Activated CD4-positive, alpha-beta T cell treated with anti-CD3 and anti-CD28 coated beads for 36 hours (primary cell): ENCODE measurements at regions of chr7 and their contacts with region 1.

Region 1: GRCh38 chr7:76262683-76263402 is 39.6 kb upstream of the HSPB1 start:
- DNase-seq: peak; percentile 69
- ATAC-seq: peak; percentile 47
- H3K4me3 Mint-ChIP-seq: no peak overlapping the region
- H3K27ac Mint-ChIP-seq: no peak overlapping the region
- H3K4me1 Mint-ChIP-seq: peaks cover under 1% of the 10 kb centered on the region
- H3K27me3 Mint-ChIP-seq: peaks cover 28% of the 10 kb centered on the region

Region 2: DNA sequence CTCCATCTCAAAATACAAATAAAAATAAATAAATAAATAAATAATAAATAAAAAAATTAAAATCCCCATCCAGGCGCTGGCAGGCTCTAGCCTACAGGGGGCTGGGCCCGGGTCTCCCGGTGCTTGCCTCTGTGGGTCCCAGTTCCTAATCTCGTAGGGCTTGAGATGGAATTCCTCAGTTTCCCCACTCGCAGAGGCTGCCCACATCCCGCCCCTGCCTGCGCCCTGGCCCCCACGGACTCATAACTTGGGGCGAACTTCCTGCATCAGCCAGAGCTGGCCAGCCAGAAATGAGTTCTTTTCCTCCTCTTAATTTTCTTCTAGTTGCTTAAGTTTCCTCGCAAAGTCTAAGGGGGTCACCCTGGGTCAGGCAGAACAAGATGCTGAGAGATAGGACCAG is 83.2 kb before region 1 on chr7:
- CTCF ChIA-PET with region 1: interaction called, 32 read pairs
- POLR2A ChIA-PET with region 1: no interaction called
- intact Hi-C with region 1: loop called (anchors 1 kb)
- DNase-seq: no peak
- ATAC-seq: no peak
- H3K4me3 Mint-ChIP-seq: no peak overlapping the region
- H3K27ac Mint-ChIP-seq: no peak overlapping the region
- H3K4me1 Mint-ChIP-seq: no peaks in the 10 kb centered on the region
- H3K27me3 Mint-ChIP-seq: no peaks in the 10 kb centered on the region

Region 3: DNA sequence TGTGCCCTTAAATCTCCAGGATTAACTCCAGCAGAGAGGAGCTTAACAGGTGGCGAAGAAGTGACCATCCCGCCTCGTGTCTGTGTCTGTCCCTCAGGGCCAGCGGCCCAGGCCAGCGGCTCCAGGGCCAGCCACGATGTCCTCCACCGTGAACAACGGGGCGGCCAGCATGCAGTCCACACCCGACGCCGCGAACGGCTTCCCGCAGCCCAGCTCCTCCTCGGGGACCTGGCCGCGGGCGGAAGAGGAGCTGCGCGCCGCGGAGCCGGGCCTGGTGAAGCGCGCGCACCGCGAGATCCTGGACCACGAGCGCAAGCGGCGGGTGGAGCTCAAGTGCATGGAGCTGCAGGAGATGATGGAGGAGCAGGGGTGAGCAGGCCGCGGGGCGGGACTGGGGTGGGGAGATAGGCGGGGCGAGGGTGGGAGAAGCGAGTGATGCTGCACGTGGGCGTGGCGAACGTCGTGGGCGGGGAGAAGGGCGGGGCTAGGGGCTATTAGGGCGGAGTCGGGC is 27.9 kb before region 1 on chr7:
- CTCF ChIA-PET with region 1: interaction called, 4 read pairs
- POLR2A ChIA-PET with region 1: no interaction called
- intact Hi-C with region 1: loop called in 1 of 2 experiments (anchors 1 kb)
- DNase-seq: peak; percentile 93
- ATAC-seq: peak; percentile 98
- H3K4me3 Mint-ChIP-seq: peak overlapping the region; percentile 12
- H3K27ac Mint-ChIP-seq: no peak overlapping the region
- H3K4me1 Mint-ChIP-seq: peaks cover 5% of the 10 kb centered on the region
- H3K27me3 Mint-ChIP-seq: peaks cover 54% of the 10 kb centered on the region

Region 4: DNA sequence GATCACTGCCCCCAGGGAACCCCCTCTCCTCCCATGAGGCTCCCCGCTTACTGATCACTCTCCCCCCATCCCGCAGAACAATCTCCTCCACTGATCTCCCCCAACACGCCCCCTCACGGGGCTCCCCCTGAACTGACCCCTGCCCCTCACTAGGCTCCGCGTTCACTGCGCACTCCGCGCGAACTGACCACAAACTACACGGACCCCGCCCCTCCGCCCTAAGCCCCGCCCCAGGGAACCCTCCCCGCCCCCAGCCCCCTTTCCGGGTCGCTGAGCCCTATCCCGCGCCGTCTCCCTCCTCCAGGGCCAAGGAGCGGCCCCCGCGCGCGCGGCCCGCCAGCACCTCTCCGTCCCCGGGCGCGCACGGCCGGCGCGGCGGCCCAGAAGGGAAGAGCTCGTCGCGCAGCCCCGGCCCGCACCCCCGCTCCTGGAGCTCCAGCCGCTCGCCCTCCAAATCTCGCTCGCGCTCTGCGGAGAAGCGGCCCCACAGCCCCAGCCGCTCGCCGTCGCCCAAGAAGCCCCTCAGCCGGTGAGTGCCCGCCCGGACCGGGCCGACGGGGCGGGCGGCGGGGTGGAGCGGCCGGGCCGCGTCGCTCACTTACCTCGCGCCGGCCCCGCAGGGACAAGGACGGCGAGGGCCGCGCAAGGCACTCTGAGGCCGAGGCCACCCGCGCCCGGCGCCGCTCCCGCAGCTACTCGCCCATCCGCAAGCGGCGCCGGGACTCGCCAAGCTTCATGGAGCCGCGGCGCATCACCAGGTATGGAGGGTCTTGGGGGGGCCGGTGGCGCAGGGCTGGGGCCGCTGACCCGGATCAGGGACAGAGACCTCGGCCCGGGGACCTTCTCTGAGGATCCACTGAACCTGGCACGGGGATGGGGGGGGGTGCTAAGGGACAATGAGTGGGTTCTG is 19.8 kb after region 1 on chr7:
- CTCF ChIA-PET with region 1: interaction called, 9 read pairs
- POLR2A ChIA-PET with region 1: no interaction called
- intact Hi-C with region 1: loop called in 1 of 2 experiments (anchors 2 kb)
- DNase-seq: no peak
- ATAC-seq: peak; percentile 37
- H3K4me3 Mint-ChIP-seq: peak overlapping the region; percentile 44
- H3K27ac Mint-ChIP-seq: no peak overlapping the region
- H3K4me1 Mint-ChIP-seq: peaks cover 11% of the 10 kb centered on the region
- H3K27me3 Mint-ChIP-seq: peaks cover 34% of the 10 kb centered on the region

Region 5: GRCh38 chr7:76291343-76292212 is 28.7 kb after region 1 on chr7:
- CTCF ChIA-PET with region 1: interaction called, 12 read pairs
- POLR2A ChIA-PET with region 1: no interaction called
- intact Hi-C with region 1: no loop called
- DNase-seq: peak; percentile 94
- ATAC-seq: peak; percentile 96
- H3K4me3 Mint-ChIP-seq: peak overlapping the region; percentile 20
- H3K27ac Mint-ChIP-seq: peak overlapping the region; percentile 94
- H3K4me1 Mint-ChIP-seq: peaks cover 12% of the 10 kb centered on the region
- H3K27me3 Mint-ChIP-seq: peaks cover 2% of the 10 kb centered on the region